ENCODE measurements at regions of chr10 and their contacts with region 1.

Region 1: DNA sequence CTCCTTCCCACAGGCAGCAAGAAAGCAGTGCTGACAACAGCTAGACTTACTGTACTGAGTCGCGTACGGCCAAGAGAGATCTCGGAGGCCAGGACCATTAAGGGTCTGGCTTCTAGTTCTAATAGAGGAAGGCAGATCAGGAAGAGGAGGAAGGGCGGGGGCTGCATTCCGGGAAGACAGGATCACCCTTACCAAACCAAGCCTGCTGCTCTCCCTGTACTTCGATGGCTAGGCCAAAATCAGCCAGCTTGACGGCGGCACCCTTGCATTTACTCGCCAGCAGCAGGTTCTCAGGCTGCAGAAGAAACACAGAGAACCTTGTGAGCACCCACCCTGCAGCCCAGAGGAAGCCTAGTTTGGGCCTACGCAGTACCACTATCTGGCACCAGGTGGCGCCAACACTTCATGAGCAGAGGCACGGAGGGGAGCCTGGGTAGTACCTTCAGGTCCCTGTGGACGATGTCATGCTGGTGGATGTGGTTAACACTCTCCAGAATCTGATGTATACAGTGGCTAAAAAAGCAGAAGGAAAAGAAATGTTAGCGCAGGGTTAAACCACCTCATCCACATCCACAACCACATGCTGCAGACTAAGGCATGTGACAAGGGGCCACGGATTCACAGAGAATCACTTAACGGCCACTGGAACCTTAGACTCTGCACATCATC is 25.4 kb downstream of the CAMK2G start:
- DNase-seq: peak; percentile 96
- H3K4me3 Mint-ChIP-seq: no peak overlapping the region
- H3K27ac Mint-ChIP-seq: peak overlapping the region; percentile 66
- H3K4me1 Mint-ChIP-seq: peaks cover 8% of the 10 kb centered on the region
- H3K27me3 Mint-ChIP-seq: no peaks in the 10 kb centered on the region

Region 2: GRCh38 chr10:73865459-73866442 is 16.8 kb after region 1 on chr10:
- CTCF ChIA-PET with region 1: interaction called, 28 read pairs
- intact Hi-C with region 1: loop called (anchors 1 kb)
- DNase-seq: peak; percentile 85
- H3K4me3 Mint-ChIP-seq: peak overlapping the region; percentile 76
- H3K27ac Mint-ChIP-seq: peak overlapping the region; percentile 95
- H3K4me1 Mint-ChIP-seq: peaks cover 73% of the 10 kb centered on the region
- H3K27me3 Mint-ChIP-seq: no peaks in the 10 kb centered on the region

Region 3: DNA sequence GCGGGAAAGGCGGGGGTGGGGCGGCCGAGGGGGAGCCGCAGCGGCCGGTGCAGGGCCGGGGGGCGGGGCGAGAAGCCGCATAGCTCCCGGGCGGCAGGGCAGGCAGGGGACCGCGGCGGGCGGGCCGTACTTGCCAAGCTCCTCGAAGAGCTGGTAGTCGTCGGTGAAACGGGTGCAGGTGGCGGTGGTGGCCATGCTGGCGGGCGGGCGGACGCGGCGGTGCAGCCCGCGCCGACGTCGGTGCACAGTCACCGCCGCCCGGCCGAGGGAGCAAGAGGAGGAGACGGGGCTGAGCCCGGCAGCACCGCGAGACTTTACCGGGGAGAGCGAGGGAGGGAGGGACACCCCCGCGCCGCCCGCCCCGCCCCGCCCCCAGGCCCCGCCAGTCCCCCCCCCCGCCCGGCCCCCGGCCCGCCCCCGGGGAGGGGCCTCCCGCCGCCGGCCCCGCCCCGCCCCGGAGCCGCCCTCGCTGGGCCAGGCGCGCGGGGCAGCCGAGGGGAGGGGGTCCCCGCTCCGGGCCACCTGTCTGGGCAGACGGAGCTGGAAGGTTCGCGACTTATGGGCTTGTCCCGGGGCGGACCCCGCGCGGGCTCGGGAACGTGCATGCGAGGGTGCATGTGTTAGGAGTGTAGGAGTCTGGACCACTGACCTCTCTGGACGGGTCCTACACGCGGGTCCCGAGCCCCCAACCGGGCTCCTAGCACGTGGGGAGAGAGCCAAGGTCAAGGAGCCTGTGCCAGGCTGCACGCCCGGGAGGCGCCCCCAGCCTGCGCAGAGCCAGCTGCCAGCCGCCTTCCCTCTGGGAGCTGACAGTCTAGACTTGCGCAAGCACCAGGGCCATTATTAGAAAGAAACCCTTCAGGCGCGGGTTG is 25.5 kb after region 1 on chr10 and contains the start of gene CAMK2G:
- CTCF ChIA-PET with region 1: interaction called, 443 read pairs
- intact Hi-C with region 1: loop called (anchors 1 kb)
- DNase-seq: peak; percentile 89
- H3K4me3 Mint-ChIP-seq: peak within 1 kb of the TSS; percentile 84
- H3K27ac Mint-ChIP-seq: peak within 1 kb of the TSS; percentile 88
- H3K4me1 Mint-ChIP-seq: peaks cover 68% of the 10 kb centered on the region
- H3K27me3 Mint-ChIP-seq: no peaks in the 10 kb centered on the region
- total RNA-seq, gene CAMK2G: 22.9 to 26.3 TPM

Region 4: DNA sequence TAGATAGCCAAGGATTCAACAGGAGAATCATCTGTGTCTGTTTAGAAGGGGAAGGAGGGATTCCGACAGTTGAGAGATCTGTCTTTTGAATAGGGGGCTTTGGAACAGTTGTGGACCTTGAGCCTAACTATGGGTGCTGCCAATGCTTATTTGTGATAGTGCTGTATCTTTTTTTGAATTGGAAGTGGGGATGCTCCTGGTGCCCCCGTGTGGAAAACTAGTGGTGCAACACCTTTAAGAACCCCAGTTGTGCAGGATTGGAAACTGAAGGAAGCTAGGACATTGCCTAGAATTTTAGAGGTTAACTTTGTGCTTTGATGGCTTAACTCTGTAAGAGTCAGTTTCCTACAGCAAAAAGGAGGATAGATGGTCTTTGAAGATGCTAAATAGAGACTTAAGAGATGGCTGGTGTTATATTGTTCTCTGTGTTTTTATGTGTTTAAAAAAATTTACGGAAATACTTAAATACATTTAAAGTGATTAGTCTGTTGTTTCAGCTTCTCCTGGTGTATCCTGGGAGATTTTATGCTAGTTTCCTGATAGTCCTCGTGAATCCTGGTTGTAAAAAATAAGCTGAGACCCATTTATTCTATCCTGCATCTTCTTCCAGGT is 232.3 kb after region 1 on chr10:
- CTCF ChIA-PET with region 1: no interaction called
- intact Hi-C with region 1: loop called (anchors 5 kb)
- DNase-seq: peak; percentile 56
- H3K4me3 Mint-ChIP-seq: no peak overlapping the region
- H3K27ac Mint-ChIP-seq: no peak overlapping the region
- H3K4me1 Mint-ChIP-seq: peaks cover 23% of the 10 kb centered on the region
- H3K27me3 Mint-ChIP-seq: no peaks in the 10 kb centered on the region

Measured in activated naive CD4-positive, alpha-beta T cell treated with anti-CD3 and anti-CD28 coated beads for 36 hours (primary cell).